Mammary epithelial cell (primary cell): ENCODE measurements at regions of chr12 and their contacts with region 1.

Region 1: DNA sequence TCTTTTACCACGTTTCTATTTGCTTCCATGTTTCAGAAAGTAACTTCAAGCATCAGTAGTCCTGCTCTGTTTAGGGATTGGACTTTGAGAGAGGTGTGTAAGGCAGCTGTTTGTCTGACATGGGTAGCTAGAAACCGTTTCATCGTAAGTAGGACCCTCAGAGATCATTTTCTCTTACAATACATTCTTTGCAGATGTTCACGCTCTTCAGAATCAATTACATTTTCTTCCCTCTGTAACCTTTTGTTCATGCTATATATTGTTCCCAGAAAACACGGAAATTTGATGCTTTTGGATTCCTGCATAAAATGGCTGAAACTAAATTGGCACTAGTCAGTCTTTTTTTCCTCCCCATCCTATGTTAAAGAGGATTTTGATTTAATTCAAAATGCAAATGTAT is 62.6 kb upstream of the AEBP2 start:
- DNase-seq: no peak
- H3K4me3 ChIP-seq: no peak overlapping the region
- H3K27ac ChIP-seq: no peak overlapping the region
- H3K4me1 ChIP-seq: peaks cover 5% of the 10 kb centered on the region
- H3K27me3 ChIP-seq: no peaks in the 10 kb centered on the region
- CTCF ChIP-seq: no peak

Region 2: DNA sequence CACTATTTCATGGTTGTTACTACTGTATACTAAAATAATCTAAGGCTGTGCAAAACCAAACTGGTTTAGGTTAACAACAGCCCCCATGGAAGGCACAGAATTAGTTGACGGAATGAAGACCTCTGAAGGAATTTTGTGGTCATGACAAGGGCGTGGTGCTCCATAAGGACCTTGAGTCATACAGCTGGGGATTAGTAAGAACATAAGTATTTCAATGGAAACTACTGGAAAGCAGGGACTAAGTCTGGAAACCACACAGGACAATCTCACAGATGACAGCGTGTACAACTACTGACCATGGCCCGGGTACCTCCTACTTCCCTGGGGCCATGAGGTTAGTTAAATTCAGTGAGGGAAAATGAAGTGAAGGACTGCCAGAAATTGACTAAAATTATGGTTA is 345.7 kb before region 1 on chr12:
- CTCF ChIA-PET with region 1: no interaction called
- dilution Hi-C with region 1: no loop called
- in situ Hi-C with region 1: no loop called
- intact Hi-C with region 1: no loop called
- DNase-seq: peak; percentile 94
- H3K4me3 ChIP-seq: peak overlapping the region in 2 of 3 experiments; percentile 17 to 25
- H3K27ac ChIP-seq: peak overlapping the region; percentile 99
- H3K4me1 ChIP-seq: peaks cover 23% of the 10 kb centered on the region
- H3K27me3 ChIP-seq: no peaks in the 10 kb centered on the region
- CTCF ChIP-seq: no peak

Region 3: DNA sequence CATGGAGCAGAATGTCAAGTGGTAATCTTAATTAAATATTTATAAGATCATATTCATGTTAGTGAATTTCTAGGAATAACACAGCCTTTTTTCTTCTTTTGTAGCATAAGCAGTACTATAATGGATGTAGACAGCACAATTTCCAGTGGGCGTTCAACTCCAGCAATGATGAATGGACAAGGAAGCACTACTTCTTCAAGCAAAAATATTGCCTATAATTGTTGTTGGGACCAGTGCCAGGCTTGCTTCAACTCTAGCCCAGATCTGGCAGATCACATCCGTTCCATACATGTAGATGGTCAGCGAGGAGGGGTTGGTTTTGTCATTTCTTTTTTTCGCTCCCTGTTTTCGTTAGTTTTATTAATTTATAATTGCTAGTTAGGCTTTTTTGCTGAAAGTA is 85.7 kb after region 1 on chr12:
- CTCF ChIA-PET with region 1: no interaction called
- dilution Hi-C with region 1: loop called (anchors 5 kb)
- in situ Hi-C with region 1: no loop called
- intact Hi-C with region 1: no loop called
- DNase-seq: no peak
- H3K4me3 ChIP-seq: no peak overlapping the region
- H3K27ac ChIP-seq: no peak overlapping the region
- H3K4me1 ChIP-seq: no peaks in the 10 kb centered on the region
- H3K27me3 ChIP-seq: no peaks in the 10 kb centered on the region
- CTCF ChIP-seq: no peak